ENCODE measurements at regions of chr11 and their contacts with region 1.

Region 1: DNA sequence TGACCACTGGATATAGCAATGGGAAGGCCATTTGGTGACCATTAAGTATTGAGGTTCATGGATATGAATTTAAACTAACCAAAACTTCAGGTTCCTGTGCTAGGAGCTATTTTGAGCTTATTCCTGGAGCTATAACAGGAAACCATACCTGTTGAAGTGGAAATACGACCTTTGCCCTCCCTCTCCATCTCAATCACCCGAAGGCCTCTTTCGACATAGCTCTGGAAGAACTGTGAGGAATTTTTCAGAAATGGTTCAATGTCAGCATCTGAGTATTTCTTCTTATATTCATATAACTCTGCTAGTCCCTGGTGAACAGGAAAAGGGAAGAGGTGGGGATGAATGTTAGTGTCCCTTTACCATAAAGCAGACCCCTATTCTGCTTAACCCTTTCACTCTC is 31.1 kb downstream of the F2 start:
- DNase-seq: no peak
- H3K4me3 ChIP-seq: no peak overlapping the region
- H3K27ac ChIP-seq: no peak overlapping the region
- H3K4me1 ChIP-seq: no peaks in the 10 kb centered on the region
- H3K27me3 ChIP-seq: no peaks in the 10 kb centered on the region
- CTCF ChIP-seq: no peak

Region 2: GRCh38 chr11:46786110-46786509 is 36.0 kb after region 1 on chr11:
- CTCF ChIA-PET with region 1: no interaction called
- dilution Hi-C with region 1: no loop called
- in situ Hi-C with region 1: no loop called
- intact Hi-C with region 1: loop called (anchors 5 kb)
- DNase-seq: no peak
- H3K4me3 ChIP-seq: no peak overlapping the region
- H3K27ac ChIP-seq: no peak overlapping the region
- H3K4me1 ChIP-seq: no peaks in the 10 kb centered on the region
- H3K27me3 ChIP-seq: no peaks in the 10 kb centered on the region
- CTCF ChIP-seq: no peak

Region 3: DNA sequence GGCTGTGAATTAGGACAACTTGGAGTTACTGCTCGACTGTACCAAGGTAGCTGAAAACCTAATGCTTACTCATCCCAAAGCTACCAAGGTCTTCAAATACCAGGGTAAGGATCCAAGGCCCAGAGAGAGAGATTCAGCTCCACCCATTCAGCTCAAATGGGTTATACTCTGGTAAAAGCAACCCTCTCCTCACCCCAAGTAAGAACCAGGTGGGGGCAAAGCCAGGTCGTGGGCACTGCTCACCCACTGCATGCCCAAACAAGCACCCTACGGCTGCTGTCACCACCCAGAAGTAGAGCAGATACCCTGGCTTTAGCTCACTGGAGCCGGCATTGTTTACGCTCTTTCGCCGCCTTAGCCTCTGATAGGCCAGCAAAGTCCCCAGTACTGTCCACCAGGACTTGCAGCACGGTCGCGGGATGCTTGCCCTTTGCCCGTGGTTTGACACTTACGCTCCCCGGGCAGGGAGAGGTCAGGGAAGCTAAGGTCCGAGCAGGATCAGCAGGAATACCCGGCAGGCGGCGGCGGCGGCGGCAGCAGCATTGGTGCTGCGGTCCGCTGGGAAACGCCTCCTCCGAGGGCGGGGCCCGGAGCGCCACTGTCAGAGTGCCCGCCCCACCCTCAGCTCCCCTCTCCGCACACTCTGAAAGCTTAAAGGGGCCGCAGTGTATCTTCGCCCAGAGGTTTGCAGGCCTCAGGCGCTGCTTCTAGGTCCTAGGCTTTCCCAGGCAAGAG is 76.4 kb after region 1 on chr11:
- CTCF ChIA-PET with region 1: no interaction called
- dilution Hi-C with region 1: no loop called
- in situ Hi-C with region 1: no loop called
- intact Hi-C with region 1: no loop called
- DNase-seq: peak; percentile 77
- H3K4me3 ChIP-seq: peak overlapping the region; percentile 41 to 62 (median 57)
- H3K27ac ChIP-seq: peak overlapping the region; percentile 19
- H3K4me1 ChIP-seq: peaks cover 29% of the 10 kb centered on the region
- H3K27me3 ChIP-seq: no peaks in the 10 kb centered on the region
- CTCF ChIP-seq: peak in 1 of 2 donors; percentile 28

Region 4: GRCh38 chr11:46987183-46987582 is 237.1 kb after region 1 on chr11:
- CTCF ChIA-PET with region 1: no interaction called
- dilution Hi-C with region 1: no loop called
- in situ Hi-C with region 1: no loop called
- intact Hi-C with region 1: no loop called
- DNase-seq: peak; percentile 79
- H3K4me3 ChIP-seq: no peak overlapping the region
- H3K27ac ChIP-seq: no peak overlapping the region
- H3K4me1 ChIP-seq: peaks cover 7% of the 10 kb centered on the region
- H3K27me3 ChIP-seq: no peaks in the 10 kb centered on the region
- CTCF ChIP-seq: peak; percentile 23 to 40

Measured in mammary epithelial cell (primary cell).